ENCODE measurements at regions of chr2 and their contacts with region 1.

Region 1: DNA sequence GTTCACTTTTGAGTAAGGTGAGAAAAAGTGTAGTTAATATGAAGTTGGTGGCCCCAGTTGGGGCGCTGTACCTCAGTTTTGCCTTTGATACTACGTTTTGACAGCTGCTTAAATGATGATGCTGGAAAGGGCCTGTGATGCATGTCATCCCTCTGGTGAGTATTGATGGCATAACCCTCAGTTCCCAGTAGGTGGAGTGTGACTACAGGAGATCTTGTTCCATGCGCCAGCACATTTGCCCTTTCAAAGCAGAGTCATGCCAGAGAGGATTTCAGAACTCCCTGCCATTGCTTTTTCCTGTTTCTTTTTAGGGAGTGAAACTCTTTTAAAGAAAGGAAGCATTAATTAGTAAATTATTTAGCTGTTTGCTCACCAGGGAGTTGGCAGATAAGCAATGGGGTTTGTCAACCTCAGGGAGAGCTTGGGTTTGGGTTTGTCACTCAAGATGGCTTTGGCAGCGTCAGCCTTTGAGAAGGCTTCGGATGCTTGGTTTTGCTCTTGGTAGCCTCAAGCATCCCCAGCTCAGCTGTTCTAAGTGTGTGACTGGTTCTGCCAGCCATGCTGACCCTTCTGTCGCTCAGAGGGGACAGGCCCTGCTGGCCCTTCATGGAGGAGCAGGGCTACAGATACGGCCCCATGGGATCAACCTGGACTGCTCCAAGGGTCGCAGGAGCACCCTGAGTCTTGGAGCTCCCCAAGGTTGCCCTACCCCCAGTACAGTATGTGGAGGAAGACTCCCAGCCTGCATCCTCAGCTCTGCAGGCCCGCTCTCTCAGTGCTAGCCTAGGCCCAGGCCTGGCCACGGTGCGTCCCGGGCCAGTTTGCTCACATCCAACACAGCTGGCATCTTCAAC is 29.1 kb downstream of the ARMC9 start:
- DNase-seq: peak; percentile 33
- H3K4me3 ChIP-seq: no peak overlapping the region
- H3K27ac ChIP-seq: no peak overlapping the region
- H3K27me3 ChIP-seq: no peaks in the 10 kb centered on the region
- CTCF ChIP-seq: peak; percentile 86

Region 2: DNA sequence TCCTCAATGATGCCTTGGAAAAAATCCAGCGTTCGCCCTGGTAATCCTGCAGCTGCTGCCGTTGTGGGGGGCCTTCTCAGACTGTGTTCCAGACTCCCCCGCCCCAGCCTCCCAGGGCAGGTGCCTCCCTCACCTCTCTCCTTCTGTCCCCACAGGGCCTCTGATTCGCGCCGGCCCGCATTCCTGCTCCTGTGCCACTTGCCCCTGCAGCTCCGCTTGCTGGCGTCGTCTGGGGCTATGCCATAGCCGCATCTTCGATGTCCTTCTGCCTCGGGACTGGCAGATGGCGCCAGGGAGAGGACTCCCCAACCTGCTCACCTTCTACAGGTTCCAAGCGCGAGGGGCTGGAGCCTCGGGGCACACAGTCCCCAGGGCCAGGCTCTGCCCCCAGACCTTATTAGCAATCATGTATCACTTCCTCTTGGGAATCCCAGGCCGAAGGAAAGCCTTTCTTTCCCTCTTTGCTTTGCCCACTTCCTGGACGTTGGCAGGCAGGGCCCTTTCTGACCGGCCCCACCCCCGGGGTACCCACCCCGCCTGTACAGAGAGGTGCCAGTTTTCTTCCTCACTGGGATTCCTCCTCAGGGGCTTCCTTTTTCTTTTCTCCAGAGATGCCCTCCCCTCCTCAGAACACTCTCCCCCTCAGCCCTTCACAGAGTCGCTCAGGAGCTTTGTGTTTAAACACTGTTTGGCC is 227.2 kb before region 1 on chr2:
- CTCF ChIA-PET with region 1: no interaction called
- POLR2A ChIA-PET with region 1: no interaction called
- DNase-seq: no peak
- H3K4me3 ChIP-seq: no peak overlapping the region
- H3K27ac ChIP-seq: no peak overlapping the region
- H3K27me3 ChIP-seq: peaks cover 45% of the 10 kb centered on the region
- CTCF ChIP-seq: no peak

Region 3: GRCh38 chr2:231104115-231104713 is 123.3 kb before region 1 on chr2:
- CTCF ChIA-PET with region 1: interaction called, 56 read pairs
- POLR2A ChIA-PET with region 1: no interaction called
- DNase-seq: peak; percentile 44
- H3K4me3 ChIP-seq: no peak overlapping the region
- H3K27ac ChIP-seq: no peak overlapping the region
- H3K27me3 ChIP-seq: no peaks in the 10 kb centered on the region
- CTCF ChIP-seq: peak; percentile 94

Region 4: DNA sequence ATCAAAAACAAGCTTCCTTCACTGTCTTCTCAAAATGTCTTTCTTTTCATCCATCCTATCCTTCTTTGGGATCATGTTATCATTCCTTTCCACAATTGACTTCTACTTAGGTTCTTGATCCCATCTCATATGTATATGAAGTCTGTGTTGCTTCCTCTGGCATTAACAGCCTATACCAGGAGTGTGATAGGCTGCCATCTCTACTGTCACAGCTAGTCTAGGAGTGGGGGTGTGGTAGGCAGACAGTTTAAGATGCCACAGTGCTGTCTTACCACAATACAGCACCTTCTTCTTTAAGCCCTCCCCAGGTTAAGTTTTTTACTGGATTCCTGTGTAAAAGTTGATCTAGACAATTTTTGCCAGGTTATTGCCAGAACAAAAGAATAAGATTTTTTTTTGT is 99.0 kb before region 1 on chr2:
- CTCF ChIA-PET with region 1: interaction called, 13 read pairs
- POLR2A ChIA-PET with region 1: no interaction called
- DNase-seq: no peak
- H3K4me3 ChIP-seq: no peak overlapping the region
- H3K27ac ChIP-seq: no peak overlapping the region
- H3K27me3 ChIP-seq: no peaks in the 10 kb centered on the region
- CTCF ChIP-seq: no peak

Region 5: DNA sequence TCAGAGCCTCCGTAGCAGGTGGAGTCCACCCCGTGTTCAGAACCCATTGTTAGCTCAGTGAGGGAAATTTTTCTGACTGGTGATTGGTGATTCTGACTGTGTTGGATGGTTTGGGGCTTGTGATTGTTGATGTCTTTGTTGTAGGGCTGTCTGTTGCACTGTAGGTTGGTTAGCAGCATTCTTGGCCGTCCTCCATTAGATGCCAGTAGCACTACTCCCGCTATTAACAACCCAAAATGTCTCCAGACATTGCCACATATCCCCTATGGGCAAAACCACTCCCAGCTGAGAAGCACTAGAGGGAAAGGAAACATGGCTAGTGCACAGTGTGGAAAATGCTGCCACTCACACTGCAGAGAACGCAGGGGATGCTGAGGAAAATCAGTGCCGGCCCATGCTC is 22.6 kb after region 1 on chr2:
- CTCF ChIA-PET with region 1: interaction called, 15 read pairs
- POLR2A ChIA-PET with region 1: no interaction called
- DNase-seq: no peak
- H3K4me3 ChIP-seq: no peak overlapping the region
- H3K27ac ChIP-seq: no peak overlapping the region
- H3K27me3 ChIP-seq: no peaks in the 10 kb centered on the region
- CTCF ChIP-seq: no peak

Region 6: DNA sequence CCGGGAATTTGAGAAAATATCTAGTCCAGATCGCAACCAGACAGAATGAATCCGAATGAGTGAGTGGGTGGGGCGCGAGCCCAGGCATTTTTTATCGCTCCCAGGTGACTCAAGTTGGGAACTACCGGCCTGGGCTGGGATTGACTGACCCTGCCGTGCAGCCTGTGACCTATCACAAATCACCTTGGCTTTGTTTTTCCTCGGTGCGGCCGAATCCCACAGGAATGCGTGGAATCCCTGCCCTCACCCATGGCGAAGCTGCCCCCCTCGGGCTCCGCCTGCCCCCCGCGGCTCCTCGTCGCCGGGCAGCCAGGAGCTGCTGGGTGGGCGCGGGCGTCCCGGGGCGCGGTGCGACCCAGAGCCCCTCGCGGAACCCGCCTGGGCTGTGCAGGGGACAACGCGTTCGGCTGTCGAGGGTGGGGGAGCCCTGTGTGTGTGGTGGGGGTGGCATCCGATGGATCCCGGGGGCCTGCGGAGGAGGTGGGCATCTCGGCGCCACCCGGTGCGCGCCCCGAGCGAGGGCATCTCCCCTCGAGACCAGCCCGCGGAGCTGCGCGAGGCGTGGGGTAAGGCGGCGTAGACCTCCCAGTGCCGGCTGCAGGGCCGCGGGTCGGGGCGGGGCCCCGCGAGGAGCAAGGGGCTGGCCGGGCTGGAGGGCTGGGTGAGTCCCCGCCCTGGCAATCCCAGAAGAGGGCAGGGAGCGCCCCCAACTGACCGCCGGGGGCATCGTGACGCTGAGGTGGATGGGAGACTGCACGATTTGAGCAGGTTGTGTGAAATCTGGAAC is 184.5 kb after region 1 on chr2:
- CTCF ChIA-PET with region 1: interaction called, 67 read pairs
- POLR2A ChIA-PET with region 1: interaction called, 3 read pairs
- DNase-seq: peak; percentile 50
- H3K4me3 ChIP-seq: peak overlapping the region; percentile 73
- H3K27ac ChIP-seq: no peak overlapping the region
- H3K27me3 ChIP-seq: no peaks in the 10 kb centered on the region
- CTCF ChIP-seq: peak; percentile 92